IMR-90 (cell line): ENCODE measurements at regions of chr7 and their contacts with region 1.

Region 1: GRCh38 chr7:39623018-39623731 is at the start of gene RALA:
- DNase-seq: peak; percentile 92
- ATAC-seq: peak; percentile 87
- H3K4me3 ChIP-seq: peak within 1 kb of the TSS; percentile 67
- H3K27ac ChIP-seq: peak within 1 kb of the TSS; percentile 87
- H3K4me1 ChIP-seq: peaks cover 9% of the 10 kb centered on the region; the same call in 1 of the 2 replicates
- H3K27me3 ChIP-seq: no peaks in the 10 kb centered on the region
- CTCF ChIP-seq: peak; percentile 0; the same call in 1 of the 2 replicates
- POLR2A ChIP-seq: peak; percentile 93
- RAD21 ChIP-seq: no peak
- total RNA-seq, gene RALA: 7.7 and 15.8 TPM in 2 replicates

Region 2: DNA sequence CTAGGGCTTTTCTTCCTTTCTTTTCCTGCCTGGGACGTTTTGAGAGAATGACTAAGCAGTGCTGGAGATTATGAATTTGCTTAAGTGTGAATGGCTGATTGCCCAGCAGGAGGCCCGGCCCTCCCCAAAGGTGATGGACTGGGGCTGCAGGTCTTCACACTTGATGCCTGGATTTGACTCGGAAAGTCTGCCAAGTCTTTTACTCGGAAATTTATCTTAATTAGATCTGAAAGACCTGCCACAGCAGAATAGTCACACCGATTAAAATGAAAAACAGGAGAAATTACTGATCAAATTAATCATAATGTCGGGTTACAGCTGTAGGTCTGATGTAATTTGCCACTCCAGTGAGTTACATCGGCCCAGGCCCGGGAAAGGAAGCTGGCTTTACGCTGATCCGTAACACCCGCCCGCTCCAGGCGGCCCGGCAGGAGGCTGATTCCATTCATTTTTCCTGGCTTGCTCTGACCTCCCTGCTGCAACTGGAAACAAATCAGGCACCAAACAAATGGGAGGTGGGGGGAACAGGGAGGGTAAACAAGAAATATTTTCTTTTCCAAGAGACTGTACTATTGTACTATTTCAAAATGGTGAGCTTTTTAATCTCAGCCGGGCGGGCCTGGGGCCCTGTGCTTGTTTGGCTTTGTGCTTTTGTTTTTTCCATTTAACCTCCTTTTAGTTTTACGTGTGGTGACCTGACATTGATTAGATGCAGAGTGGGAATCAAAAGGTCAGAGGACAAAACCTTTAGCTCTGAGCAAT is 269.4 kb before region 1 on chr7:
- CTCF ChIA-PET with region 1: no interaction called
- POLR2A ChIA-PET with region 1: no interaction called
- dilution Hi-C with region 1: no loop called
- in situ Hi-C with region 1: no loop called
- intact Hi-C with region 1: no loop called
- DNase-seq: no peak
- ATAC-seq: peak; percentile 61
- H3K4me3 ChIP-seq: no peak overlapping the region
- H3K27ac ChIP-seq: no peak overlapping the region
- H3K4me1 ChIP-seq: no peaks in the 10 kb centered on the region
- H3K27me3 ChIP-seq: no peaks in the 10 kb centered on the region; the same call in 1 of the 2 replicates
- CTCF ChIP-seq: no peak
- POLR2A ChIP-seq: no peak
- RAD21 ChIP-seq: no peak

Region 3: DNA sequence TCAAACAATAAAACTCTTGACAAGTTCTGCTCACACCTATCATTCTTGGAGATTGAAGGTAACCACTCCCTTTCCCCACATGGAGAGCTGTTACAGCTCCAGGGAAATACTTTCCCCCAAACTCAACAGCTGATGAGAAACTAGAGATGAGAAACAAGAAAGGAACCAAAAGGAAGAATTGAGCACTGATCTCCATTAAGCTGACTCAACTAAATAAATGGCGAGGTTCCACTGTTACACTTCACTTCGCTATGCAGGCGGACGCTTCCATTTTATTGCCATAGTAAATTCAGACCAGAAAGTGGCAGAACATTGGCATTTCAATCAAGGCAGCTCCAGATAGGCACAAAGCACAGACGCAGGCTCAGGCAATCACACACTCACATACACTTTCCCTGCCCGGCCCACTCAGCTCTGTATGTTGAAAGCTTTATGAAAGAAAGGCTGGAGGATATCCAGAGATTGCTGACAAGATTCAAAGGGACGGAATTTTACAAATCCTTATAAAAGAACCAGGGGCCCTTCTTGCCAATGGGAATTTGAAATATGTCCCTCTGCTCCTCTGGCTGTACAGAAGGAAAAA is 68.5 kb before region 1 on chr7:
- CTCF ChIA-PET with region 1: no interaction called
- POLR2A ChIA-PET with region 1: no interaction called
- dilution Hi-C with region 1: no loop called
- in situ Hi-C with region 1: no loop called
- intact Hi-C with region 1: no loop called
- DNase-seq: no peak
- ATAC-seq: peak; percentile 46; the same call in 1 of the 2 replicates
- H3K4me3 ChIP-seq: no peak overlapping the region
- H3K27ac ChIP-seq: no peak overlapping the region
- H3K4me1 ChIP-seq: no peaks in the 10 kb centered on the region
- H3K27me3 ChIP-seq: peaks cover 7% of the 10 kb centered on the region
- CTCF ChIP-seq: no peak
- POLR2A ChIP-seq: no peak
- RAD21 ChIP-seq: no peak

Region 4: DNA sequence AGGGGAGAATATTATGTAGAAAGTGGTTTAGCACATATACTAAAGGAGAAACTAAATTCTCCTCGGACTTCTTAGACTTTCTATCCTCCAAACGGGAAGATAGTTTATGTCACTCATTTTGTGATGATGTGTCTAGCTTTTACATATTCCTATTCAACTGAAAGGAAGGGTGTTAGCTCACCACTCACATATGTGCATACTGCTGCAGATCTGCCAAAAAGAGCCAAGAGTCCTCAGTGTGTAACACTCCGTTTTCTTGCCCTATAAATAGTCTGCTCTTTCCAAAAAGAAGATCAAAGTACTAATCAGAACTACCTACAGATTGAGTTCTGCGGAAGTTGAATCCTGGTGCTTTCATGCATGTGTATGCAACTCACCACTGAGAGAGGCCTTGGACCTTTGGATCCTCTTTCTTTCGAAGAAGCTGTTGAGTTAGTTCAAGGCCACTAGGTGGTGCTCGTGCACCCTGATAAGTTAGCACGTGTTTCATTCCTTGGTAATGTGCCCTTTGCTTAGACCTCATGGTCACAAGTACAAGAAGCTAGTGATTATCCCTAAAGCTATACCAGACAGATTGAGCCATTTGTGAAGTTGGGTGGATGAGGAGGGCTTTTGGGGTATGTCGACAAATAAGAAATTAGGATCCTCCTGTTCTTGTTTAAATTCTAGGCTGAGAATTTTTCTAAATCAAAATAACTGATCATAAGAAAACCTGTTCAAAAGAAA is 42.9 kb before region 1 on chr7:
- CTCF ChIA-PET with region 1: interaction called, 9 read pairs
- POLR2A ChIA-PET with region 1: no interaction called
- dilution Hi-C with region 1: no loop called
- in situ Hi-C with region 1: no loop called
- intact Hi-C with region 1: loop called (anchors 2 kb)
- DNase-seq: peak; percentile 97
- ATAC-seq: peak; percentile 98
- H3K4me3 ChIP-seq: no peak overlapping the region
- H3K27ac ChIP-seq: no peak overlapping the region
- H3K4me1 ChIP-seq: no peaks in the 10 kb centered on the region
- H3K27me3 ChIP-seq: no peaks in the 10 kb centered on the region
- CTCF ChIP-seq: peak; percentile 90
- POLR2A ChIP-seq: peak; percentile 38; the same call in 1 of the 2 replicates
- RAD21 ChIP-seq: peak; percentile 98

Region 5: DNA sequence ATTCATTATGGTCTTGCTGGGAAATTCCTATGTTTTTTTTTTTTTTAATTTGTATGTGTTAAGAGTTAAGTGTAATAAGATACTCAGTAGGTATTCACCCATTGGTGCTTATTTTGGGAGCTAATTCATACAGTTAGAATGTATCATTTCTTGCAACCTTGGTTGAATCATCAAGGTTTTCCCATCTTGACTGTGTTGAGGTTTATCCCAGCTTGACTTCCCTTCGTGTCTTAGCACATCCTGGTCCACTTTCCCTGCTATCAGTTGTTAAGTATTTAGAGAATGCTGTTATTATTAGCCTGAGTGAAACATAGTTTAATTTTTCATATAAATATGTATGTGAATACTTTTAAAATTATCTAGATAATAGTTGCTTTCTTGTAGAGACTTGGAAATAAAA is 21.0 kb after region 1 on chr7:
- CTCF ChIA-PET with region 1: no interaction called
- POLR2A ChIA-PET with region 1: no interaction called
- dilution Hi-C with region 1: no loop called
- in situ Hi-C with region 1: no loop called
- intact Hi-C with region 1: no loop called
- DNase-seq: peak; percentile 83
- ATAC-seq: peak; percentile 78
- H3K4me3 ChIP-seq: no peak overlapping the region
- H3K27ac ChIP-seq: no peak overlapping the region
- H3K4me1 ChIP-seq: peaks cover 7% of the 10 kb centered on the region
- H3K27me3 ChIP-seq: no peaks in the 10 kb centered on the region
- CTCF ChIP-seq: no peak
- POLR2A ChIP-seq: no peak
- RAD21 ChIP-seq: no peak

Region 6: GRCh38 chr7:39683216-39683845 is 60.2 kb after region 1 on chr7:
- CTCF ChIA-PET with region 1: interaction called, 3 read pairs
- POLR2A ChIA-PET with region 1: no interaction called
- dilution Hi-C with region 1: no loop called
- in situ Hi-C with region 1: no loop called
- intact Hi-C with region 1: loop called (anchors 5 kb)
- DNase-seq: peak; percentile 75
- ATAC-seq: peak; percentile 74
- H3K4me3 ChIP-seq: no peak overlapping the region
- H3K27ac ChIP-seq: peak overlapping the region; percentile 73; the same call in 1 of the 2 replicates
- H3K4me1 ChIP-seq: peaks cover 28% of the 10 kb centered on the region
- H3K27me3 ChIP-seq: no peaks in the 10 kb centered on the region
- CTCF ChIP-seq: no peak
- POLR2A ChIP-seq: no peak
- RAD21 ChIP-seq: no peak

Region 7: DNA sequence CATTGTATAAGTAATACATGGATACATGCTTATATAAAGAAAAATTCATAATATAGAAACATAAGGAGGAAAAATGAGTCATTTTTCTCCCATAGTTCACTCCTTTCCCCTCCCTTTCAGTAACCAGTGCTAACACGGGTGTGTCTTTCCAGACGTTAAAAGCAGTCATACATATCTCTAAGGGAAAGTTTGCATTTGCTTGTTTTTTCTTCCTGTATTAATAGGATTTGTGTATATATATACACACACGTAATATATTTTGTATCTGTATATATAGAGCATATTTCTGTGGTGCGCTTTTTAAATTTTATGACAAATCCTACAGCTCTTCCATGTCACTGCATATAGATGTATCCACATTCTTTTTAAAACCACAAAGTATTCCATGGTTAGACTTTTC is 79.0 kb after region 1 on chr7:
- CTCF ChIA-PET with region 1: no interaction called
- POLR2A ChIA-PET with region 1: no interaction called
- dilution Hi-C with region 1: no loop called
- in situ Hi-C with region 1: no loop called
- intact Hi-C with region 1: loop called (anchors 1 kb)
- DNase-seq: peak; percentile 86
- ATAC-seq: peak; percentile 90
- H3K4me3 ChIP-seq: no peak overlapping the region
- H3K27ac ChIP-seq: no peak overlapping the region; the same call in 1 of the 2 replicates
- H3K4me1 ChIP-seq: peaks cover 8% of the 10 kb centered on the region
- H3K27me3 ChIP-seq: no peaks in the 10 kb centered on the region
- CTCF ChIP-seq: no peak
- POLR2A ChIP-seq: no peak
- RAD21 ChIP-seq: no peak

Region 8: DNA sequence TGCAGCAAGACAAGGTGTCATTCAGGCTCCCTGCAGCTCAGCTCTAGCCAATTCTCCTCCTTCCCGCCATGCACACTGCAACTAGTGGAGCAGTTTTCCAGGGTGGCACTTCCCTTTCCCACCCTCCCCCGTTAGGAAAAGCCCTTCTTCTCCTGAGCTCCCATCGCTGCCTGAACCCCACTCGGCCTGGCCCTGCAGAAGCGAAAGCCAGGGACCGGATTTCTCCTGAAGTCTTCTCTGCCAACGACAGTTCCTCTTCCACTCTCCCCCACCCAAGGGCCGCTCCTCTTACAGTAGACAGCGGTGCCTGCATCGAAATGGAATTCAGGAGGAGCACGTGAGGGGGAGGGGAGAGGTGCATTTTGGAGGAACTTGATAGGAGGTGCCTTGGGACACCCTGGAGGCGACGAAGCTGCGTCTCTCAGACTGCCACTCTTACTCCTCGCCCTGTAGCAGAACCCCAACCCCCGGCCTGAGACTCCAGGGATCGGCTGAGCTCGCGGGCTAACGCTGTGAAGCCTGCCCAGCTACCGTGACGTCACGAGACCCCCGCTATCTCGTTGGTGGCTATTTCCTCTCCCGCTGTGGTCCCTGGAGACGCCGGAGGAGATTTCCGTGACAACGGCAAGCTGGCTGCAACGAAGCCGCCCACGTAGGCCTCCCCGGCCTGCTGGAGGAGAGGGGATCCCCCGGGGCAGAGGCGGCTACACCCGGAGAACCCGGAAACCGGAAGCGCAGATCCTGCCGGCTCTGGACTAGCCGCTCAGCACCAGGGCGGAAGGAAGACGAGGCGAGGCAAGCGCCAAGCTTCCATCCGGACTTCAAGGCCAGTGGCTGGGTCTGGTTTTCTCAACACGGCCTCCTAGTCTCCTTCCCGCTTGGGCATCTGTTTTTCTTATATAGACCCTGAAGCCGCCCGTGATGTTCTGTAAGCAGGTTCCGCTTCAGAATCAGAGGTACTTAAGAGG is 109.9 kb after region 1 on chr7:
- CTCF ChIA-PET with region 1: no interaction called
- POLR2A ChIA-PET with region 1: interaction called, 4 read pairs
- dilution Hi-C with region 1: no loop called
- in situ Hi-C with region 1: no loop called
- intact Hi-C with region 1: loop called (anchors 1 kb)
- DNase-seq: peak; percentile 98
- ATAC-seq: peak; percentile 91
- H3K4me3 ChIP-seq: peak overlapping the region; percentile 50
- H3K27ac ChIP-seq: peak overlapping the region; percentile 83
- H3K4me1 ChIP-seq: peaks cover 11% of the 10 kb centered on the region
- H3K27me3 ChIP-seq: no peaks in the 10 kb centered on the region
- CTCF ChIP-seq: no peak
- POLR2A ChIP-seq: peak; percentile 85
- RAD21 ChIP-seq: peak; percentile 2; the same call in 1 of the 2 replicates

Region 9: GRCh38 chr7:39746103-39746819 is 123.1 kb after region 1 on chr7:
- CTCF ChIA-PET with region 1: interaction called, 4 read pairs
- POLR2A ChIA-PET with region 1: interaction called, 5 read pairs
- dilution Hi-C with region 1: no loop called
- in situ Hi-C with region 1: no loop called
- intact Hi-C with region 1: loop called (anchors 1 kb)
- DNase-seq: peak; percentile 83
- ATAC-seq: peak; percentile 78
- H3K4me3 ChIP-seq: no peak overlapping the region
- H3K27ac ChIP-seq: no peak overlapping the region
- H3K4me1 ChIP-seq: peaks cover 7% of the 10 kb centered on the region
- H3K27me3 ChIP-seq: no peaks in the 10 kb centered on the region
- CTCF ChIP-seq: peak; percentile 90
- POLR2A ChIP-seq: no peak
- RAD21 ChIP-seq: peak; percentile 95